ENCODE measurements at regions of chr21 and their contacts with region 1.

Region 1: GRCh38 chr21:25421327-25422028 is 185.8 kb downstream of the MRPL39 start:
- DNase-seq: peak; percentile 68
- ATAC-seq: peak; percentile 87
- H3K4me3 ChIP-seq: no peak overlapping the region
- H3K27ac ChIP-seq: no peak overlapping the region
- H3K4me1 ChIP-seq: no peaks in the 10 kb centered on the region
- H3K27me3 ChIP-seq: peaks cover 4% of the 10 kb centered on the region
- CTCF ChIP-seq: peak; percentile 61
- POLR2A ChIP-seq: no peak
- RAD21 ChIP-seq: peak; percentile 64

Region 2: GRCh38 chr21:25507522-25507921 is 86.0 kb after region 1 on chr21:
- CTCF ChIA-PET with region 1: no interaction called
- POLR2A ChIA-PET with region 1: no interaction called
- dilution Hi-C with region 1: no loop called
- in situ Hi-C with region 1: no loop called
- intact Hi-C with region 1: no loop called
- DNase-seq: peak; percentile 23
- ATAC-seq: peak; percentile 16; the same call in 1 of the 2 replicates
- H3K4me3 ChIP-seq: no peak overlapping the region
- H3K27ac ChIP-seq: no peak overlapping the region
- H3K4me1 ChIP-seq: peaks cover 5% of the 10 kb centered on the region
- H3K27me3 ChIP-seq: no peaks in the 10 kb centered on the region
- CTCF ChIP-seq: 0 out of 2 replicates have a peak, but pooled peaks have one; percentile 3
- POLR2A ChIP-seq: no peak
- RAD21 ChIP-seq: no peak

Region 3: GRCh38 chr21:25561668-25562641 is 140.5 kb after region 1 on chr21:
- CTCF ChIA-PET with region 1: no interaction called
- POLR2A ChIA-PET with region 1: no interaction called
- dilution Hi-C with region 1: no loop called
- in situ Hi-C with region 1: loop called (anchors 10 kb)
- intact Hi-C with region 1: loop called (anchors 2 kb)
- DNase-seq: peak; percentile 82
- ATAC-seq: peak; percentile 86
- H3K4me3 ChIP-seq: peak overlapping the region; percentile 77
- H3K27ac ChIP-seq: peak overlapping the region; percentile 89
- H3K4me1 ChIP-seq: peaks cover 8% of the 10 kb centered on the region
- H3K27me3 ChIP-seq: no peaks in the 10 kb centered on the region
- CTCF ChIP-seq: peak; percentile 37
- POLR2A ChIP-seq: peak; percentile 96
- RAD21 ChIP-seq: peak; percentile 25; the same call in 1 of the 2 replicates

Region 4: DNA sequence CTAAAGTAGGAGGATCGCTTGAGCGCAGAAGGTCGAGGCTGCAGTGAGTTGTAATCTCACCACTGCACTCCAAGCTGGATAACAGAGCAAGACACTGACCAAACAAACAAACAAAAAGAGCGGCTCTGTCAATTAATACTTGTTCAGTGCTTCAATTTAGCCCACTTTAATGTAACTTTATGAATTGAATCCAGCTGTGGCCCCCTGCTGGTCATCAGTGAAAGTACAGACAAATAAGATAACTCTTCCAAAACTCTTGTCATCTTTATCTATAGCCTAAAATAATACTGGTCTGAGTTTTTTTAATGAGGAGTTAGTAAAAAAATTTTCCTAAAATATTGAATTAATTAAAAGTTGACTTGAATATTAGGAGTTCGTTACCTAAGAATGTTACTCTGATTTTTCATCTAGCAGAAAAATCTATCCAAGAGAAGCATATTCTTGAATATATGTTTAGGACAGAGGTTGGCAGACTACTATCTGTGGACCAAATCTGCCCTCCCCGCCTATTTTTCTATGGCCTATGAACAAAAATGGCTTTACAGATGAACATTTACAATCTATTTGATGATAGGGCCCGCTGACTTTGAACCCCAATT is 287.1 kb after region 1 on chr21:
- CTCF ChIA-PET with region 1: no interaction called
- POLR2A ChIA-PET with region 1: no interaction called
- dilution Hi-C with region 1: no loop called
- in situ Hi-C with region 1: no loop called
- intact Hi-C with region 1: loop called (anchors 2 kb)
- DNase-seq: peak; percentile 56
- ATAC-seq: peak; percentile 72
- H3K4me3 ChIP-seq: no peak overlapping the region
- H3K27ac ChIP-seq: no peak overlapping the region
- H3K4me1 ChIP-seq: no peaks in the 10 kb centered on the region
- H3K27me3 ChIP-seq: no peaks in the 10 kb centered on the region
- CTCF ChIP-seq: peak; percentile 73
- POLR2A ChIP-seq: no peak
- RAD21 ChIP-seq: peak; percentile 58